ENCODE measurements at regions of chr15 and their contacts with region 1.

Region 1: DNA sequence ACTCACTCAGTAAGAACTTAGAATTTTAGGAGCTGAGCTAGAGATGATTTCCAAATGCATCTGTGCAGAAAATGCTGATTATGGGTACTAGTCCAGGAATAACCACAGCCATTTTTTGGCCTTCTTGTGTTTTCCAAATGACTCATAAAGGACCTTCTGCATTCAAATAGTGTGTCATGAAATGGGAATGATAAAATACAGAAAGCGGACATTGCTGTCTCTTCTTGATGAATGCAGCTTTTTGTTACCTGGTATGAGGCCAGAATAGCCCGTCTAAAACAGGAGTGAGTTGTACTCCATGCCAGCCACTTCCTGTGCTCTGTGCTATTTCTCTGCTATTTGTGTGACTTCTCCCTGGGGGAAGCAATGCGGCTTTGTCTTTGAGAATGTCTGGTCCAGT is 20.5 kb upstream of the FRMD5 start:
- DNase-seq: no peak
- H3K4me3 Mint-ChIP-seq: no peak overlapping the region
- H3K27ac Mint-ChIP-seq: no peak overlapping the region
- H3K4me1 Mint-ChIP-seq: no peaks in the 10 kb centered on the region
- H3K27me3 Mint-ChIP-seq: peaks cover 11% of the 10 kb centered on the region

Region 2: GRCh38 chr15:43789122-43789808 is 426.3 kb before region 1 on chr15:
- intact Hi-C with region 1: no loop called
- DNase-seq: no peak
- H3K4me3 Mint-ChIP-seq: no peak overlapping the region
- H3K27ac Mint-ChIP-seq: no peak overlapping the region
- H3K4me1 Mint-ChIP-seq: peaks cover 16% of the 10 kb centered on the region
- H3K27me3 Mint-ChIP-seq: no peaks in the 10 kb centered on the region

Region 3: GRCh38 chr15:43872416-43873020 is 343.1 kb before region 1 on chr15:
- intact Hi-C with region 1: loop called (anchors 1 kb)
- DNase-seq: no peak
- H3K4me3 Mint-ChIP-seq: no peak overlapping the region
- H3K27ac Mint-ChIP-seq: no peak overlapping the region
- H3K4me1 Mint-ChIP-seq: no peaks in the 10 kb centered on the region
- H3K27me3 Mint-ChIP-seq: no peaks in the 10 kb centered on the region

Region 4: GRCh38 chr15:43903864-43904290 is 311.7 kb before region 1 on chr15:
- intact Hi-C with region 1: loop called (anchors 1 kb)
- DNase-seq: peak; percentile 41
- H3K4me3 Mint-ChIP-seq: no peak overlapping the region
- H3K27ac Mint-ChIP-seq: no peak overlapping the region
- H3K4me1 Mint-ChIP-seq: no peaks in the 10 kb centered on the region
- H3K27me3 Mint-ChIP-seq: no peaks in the 10 kb centered on the region

Region 5: DNA sequence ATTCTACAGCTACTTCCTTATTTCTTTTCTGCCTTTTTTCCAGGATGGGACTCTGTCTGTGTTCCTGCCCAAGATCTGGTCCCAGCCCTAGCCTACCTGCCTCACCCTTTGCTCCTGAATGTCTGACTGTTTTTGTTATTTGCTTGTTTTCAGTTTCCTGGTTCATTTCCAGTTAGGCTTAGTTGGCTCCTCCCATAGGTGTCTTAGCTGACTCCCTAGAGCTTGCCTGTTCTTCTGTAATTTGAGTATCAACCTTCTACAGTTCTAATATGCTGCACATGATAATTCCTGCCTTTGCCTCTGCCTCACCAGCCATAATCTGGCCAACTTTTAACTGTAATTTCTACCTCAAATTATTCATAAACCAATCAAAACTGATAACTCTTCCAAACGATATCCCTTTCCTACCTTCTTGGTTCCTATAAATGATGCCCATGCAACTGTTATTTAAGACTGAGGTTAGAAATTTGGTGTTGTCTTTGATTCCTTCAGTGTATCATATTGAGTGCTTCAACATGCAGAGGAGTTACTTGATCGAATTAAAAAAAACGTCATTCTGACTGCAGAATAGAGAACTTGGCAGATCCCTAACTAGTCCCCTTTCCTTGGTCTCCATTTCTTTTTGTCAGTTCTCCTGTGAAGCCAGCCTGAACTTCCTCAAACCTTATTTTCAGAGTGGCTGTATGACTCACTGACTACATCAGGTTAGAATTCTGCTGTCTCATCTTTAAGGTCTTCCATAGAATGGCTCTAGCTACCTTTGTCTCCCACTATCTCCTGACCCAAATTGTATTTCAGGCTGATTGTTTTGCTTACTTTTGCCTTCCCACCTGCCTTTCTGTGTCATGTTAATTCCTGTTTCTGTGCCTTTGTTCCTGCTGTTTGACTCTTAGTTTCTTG is 81.3 kb after region 1 on chr15:
- intact Hi-C with region 1: no loop called
- DNase-seq: no peak
- H3K4me3 Mint-ChIP-seq: peak overlapping the region; percentile 51
- H3K27ac Mint-ChIP-seq: peak overlapping the region; percentile 49
- H3K4me1 Mint-ChIP-seq: peaks cover 37% of the 10 kb centered on the region
- H3K27me3 Mint-ChIP-seq: no peaks in the 10 kb centered on the region

Region 6: DNA sequence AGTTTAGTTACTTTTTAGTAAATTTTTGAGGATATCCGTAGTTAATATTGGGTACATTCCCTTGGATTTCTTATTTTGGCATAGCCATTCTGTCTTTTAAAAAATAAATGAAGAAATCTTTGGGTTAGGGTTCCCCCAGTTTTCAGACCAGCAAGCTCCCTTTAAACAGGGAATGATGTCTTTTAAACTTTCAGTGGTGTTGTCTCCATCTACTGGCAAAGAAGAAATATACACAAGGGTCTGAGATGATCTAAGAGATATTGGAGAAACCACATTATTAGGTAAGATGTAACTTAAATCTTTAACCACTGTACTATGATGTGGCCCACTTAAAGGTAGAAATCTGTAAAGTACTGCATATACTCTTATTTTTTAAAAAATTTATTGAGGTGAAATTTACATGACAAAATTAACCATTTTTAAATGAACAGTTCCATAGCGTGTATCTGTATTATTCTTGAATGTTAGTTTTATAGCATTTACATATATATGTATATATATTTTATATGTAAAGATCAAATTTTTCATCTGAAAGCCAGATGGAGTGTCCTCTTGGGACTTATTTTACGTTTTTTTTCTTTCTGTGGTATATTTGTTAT is 286.3 kb after region 1 on chr15:
- intact Hi-C with region 1: loop called (anchors 1 kb)
- DNase-seq: no peak
- H3K4me3 Mint-ChIP-seq: no peak overlapping the region
- H3K27ac Mint-ChIP-seq: no peak overlapping the region
- H3K4me1 Mint-ChIP-seq: peaks cover 22% of the 10 kb centered on the region
- H3K27me3 Mint-ChIP-seq: no peaks in the 10 kb centered on the region